CD4-positive, alpha-beta T cell (primary cell): ENCODE measurements at regions of chr19 and their contacts with region 1.

Region 1: DNA sequence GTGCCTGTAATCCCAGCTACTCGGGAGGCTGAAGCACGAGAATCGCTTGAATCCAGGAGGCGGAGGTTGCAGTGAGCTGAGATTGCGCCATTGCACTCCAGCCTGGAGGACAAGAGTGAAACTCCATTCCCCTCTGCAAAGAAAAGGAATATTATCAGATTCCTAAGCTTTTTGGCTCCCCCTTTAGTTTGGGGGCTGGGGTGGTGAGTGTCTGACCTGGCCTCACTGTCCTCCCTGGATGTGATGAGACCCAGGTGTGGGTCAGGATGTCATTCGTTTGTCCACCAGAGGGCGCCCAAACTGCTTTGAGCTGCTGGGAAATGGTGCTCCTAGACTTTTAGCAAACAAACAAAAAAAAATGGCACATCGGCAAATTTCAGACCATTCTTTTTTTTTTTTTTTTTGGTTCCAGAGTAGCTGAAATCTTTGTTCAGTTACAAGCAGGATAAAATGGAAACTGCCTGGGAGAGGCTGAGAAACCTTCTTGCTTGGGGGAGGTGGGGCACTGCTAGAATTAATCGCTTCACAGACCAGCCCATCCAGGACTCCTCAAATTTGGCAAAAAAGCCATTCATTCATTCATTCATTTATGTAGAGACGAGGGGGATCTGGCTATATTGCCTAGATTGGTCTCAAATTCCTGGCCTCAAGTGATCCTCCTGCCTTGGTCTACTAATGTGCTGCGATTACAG is 29.4 kb downstream of the SPC24 start:
- DNase-seq: peak; percentile 65 to 88 (median 74)
- ATAC-seq: peak; percentile 64
- H3K4me3 ChIP-seq: no peak overlapping the region
- H3K4me3 Mint-ChIP-seq: no peak overlapping the region
- H3K27ac ChIP-seq: no peak overlapping the region
- H3K27ac Mint-ChIP-seq: no peak overlapping the region
- H3K4me1 ChIP-seq: peaks cover 12% of the 10 kb centered on the region
- H3K4me1 Mint-ChIP-seq: no peaks in the 10 kb centered on the region
- H3K27me3 ChIP-seq: no peaks in the 10 kb centered on the region
- H3K27me3 Mint-ChIP-seq: no peaks in the 10 kb centered on the region
- CTCF ChIP-seq: peak; percentile 82

Region 2: DNA sequence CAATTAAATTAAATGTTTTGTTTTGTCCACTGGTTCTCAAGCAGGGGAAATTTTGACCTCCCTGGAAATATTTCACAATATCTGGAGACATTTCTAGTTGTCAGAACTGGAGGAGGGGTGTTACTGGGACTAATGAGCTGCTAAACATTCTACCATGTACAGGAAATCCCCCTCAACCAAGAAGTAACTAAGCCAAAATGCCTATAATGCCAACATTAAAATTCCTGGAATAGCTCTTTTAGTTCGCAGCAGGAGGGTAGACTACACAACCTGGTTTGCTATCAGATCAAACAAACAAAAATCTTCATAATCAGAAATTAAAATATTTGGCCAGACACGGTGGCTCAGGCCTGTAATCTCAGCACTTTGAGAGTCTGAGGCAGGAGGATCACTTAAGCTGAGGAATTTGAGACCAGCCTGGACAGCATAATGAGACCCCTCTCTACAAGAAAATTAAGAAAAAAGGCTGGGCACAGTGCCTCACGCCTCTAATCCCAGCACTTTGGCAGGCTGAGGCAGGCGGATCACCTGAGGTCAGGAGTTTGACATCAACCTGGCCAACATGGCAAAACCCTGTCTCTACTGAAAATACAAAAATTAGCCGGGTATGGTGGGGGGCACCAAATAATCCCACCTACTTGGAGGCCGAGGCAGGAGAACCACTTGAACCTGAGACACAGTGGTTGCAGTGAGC is 179.0 kb before region 1 on chr19:
- CTCF ChIA-PET with region 1: no interaction called
- POLR2A ChIA-PET with region 1: no interaction called
- intact Hi-C with region 1: no loop called
- DNase-seq: no peak
- ATAC-seq: no peak
- H3K4me3 ChIP-seq: no peak overlapping the region
- H3K4me3 Mint-ChIP-seq: no peak overlapping the region
- H3K27ac ChIP-seq: no peak overlapping the region
- H3K27ac Mint-ChIP-seq: no peak overlapping the region
- H3K4me1 ChIP-seq: peaks cover 2% of the 10 kb centered on the region
- H3K4me1 Mint-ChIP-seq: peaks cover 2% of the 10 kb centered on the region
- H3K27me3 ChIP-seq: no peaks in the 10 kb centered on the region
- H3K27me3 Mint-ChIP-seq: no peaks in the 10 kb centered on the region
- CTCF ChIP-seq: no peak

Region 3: DNA sequence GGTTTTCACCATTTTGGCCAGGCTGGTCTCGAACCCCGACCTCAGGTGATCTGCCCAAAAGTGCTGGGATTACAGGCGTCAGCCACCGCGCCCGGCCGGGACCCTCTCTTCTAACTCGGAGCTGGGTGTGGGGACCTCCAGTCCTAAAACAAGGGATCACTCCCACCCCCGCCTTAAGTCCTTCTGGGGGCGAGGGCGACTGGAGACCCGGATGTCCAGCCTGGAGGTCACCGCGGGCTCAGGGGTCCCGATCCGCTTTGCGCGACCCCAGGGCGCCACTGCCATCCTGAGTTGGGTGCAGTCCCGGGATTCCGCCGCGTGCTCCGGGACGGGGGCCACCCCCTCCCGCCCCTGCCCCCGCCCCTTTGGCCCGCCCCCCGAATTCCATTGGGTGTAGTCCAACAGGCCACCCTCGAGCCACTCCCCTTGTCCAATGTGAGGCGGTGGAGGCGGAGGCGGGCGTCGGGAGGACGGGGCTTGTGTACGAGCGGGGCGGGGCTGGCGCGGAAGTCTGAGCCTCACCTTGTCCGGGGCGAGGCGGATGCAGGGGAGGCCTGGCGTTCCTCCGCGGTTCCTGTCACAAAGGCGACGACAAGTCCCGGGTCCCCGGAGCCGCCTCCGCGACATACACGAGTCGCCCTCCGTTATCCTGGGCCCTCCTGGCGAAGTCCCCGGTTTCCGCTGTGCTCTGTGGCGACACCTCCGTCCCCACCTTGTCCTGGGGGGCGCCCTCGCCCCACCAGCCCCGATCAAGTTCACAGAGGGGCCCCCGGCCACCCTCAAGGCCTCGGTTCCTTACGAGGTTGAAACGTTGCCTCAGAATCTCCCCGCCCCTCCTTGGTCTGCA is 35.9 kb before region 1 on chr19:
- CTCF ChIA-PET with region 1: interaction called, 20 read pairs
- POLR2A ChIA-PET with region 1: interaction called, 10 read pairs
- intact Hi-C with region 1: loop called (anchors 5 kb)
- DNase-seq: peak; percentile 94 to 99 (median 97)
- ATAC-seq: peak; percentile 86
- H3K4me3 ChIP-seq: peak overlapping the region; percentile 86
- H3K4me3 Mint-ChIP-seq: peak overlapping the region; percentile 89
- H3K27ac ChIP-seq: peak overlapping the region; percentile 98 to 99
- H3K27ac Mint-ChIP-seq: peak overlapping the region; percentile 92
- H3K4me1 ChIP-seq: peaks cover 73% of the 10 kb centered on the region
- H3K4me1 Mint-ChIP-seq: peaks cover 49% of the 10 kb centered on the region
- H3K27me3 ChIP-seq: no peaks in the 10 kb centered on the region
- H3K27me3 Mint-ChIP-seq: no peaks in the 10 kb centered on the region
- CTCF ChIP-seq: no peak

Region 4: DNA sequence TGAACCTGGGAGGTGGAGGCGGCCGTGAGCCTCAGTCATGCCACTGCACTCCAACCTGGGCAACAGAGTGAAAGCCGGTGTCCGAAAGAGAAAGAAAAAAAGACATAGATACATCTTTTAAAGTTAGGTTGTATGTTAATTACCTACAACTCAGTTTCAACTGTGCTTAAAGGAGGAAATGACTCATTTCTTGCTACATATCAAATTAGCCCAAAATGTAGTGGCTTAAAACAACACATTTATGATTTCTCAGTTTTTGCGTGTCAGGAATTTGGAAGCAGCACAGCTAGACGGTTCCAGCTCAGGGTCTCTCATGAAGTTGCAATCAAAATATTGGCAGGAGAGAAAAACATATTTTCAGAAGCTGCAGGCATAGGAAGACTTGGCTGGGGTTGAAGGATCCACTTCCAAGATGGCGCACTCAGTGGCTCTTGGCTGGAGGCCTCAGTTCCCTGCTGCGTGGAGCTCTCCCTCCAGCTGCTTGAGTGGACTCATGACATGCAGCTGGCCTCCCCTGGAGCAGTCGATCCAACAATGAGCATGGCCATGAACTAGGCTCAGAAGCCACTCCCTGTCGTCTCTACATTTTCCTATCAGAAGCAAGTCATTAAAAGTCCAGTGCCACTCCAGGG is 29.8 kb before region 1 on chr19:
- CTCF ChIA-PET with region 1: interaction called, 20 read pairs
- POLR2A ChIA-PET with region 1: no interaction called
- intact Hi-C with region 1: loop called in 1 of 2 experiments (anchors 5 kb)
- DNase-seq: peak in 6 of 14 experiments; percentile 5 to 71 (median 50)
- ATAC-seq: peak; percentile 13
- H3K4me3 ChIP-seq: peak overlapping the region; percentile 3
- H3K4me3 Mint-ChIP-seq: peak overlapping the region; percentile 18
- H3K27ac ChIP-seq: peak overlapping the region; percentile 79 to 89
- H3K27ac Mint-ChIP-seq: peak overlapping the region; percentile 84
- H3K4me1 ChIP-seq: peaks cover 63% of the 10 kb centered on the region
- H3K4me1 Mint-ChIP-seq: peaks cover 34% of the 10 kb centered on the region
- H3K27me3 ChIP-seq: no peaks in the 10 kb centered on the region
- H3K27me3 Mint-ChIP-seq: no peaks in the 10 kb centered on the region
- CTCF ChIP-seq: no peak

Region 5: GRCh38 chr19:11256189-11256588 is 130.0 kb after region 1 on chr19:
- CTCF ChIA-PET with region 1: no interaction called
- POLR2A ChIA-PET with region 1: no interaction called
- intact Hi-C with region 1: no loop called
- DNase-seq: no peak
- ATAC-seq: no peak
- H3K4me3 ChIP-seq: no peak overlapping the region
- H3K4me3 Mint-ChIP-seq: no peak overlapping the region
- H3K27ac ChIP-seq: no peak overlapping the region
- H3K27ac Mint-ChIP-seq: no peak overlapping the region
- H3K4me1 ChIP-seq: no peaks in the 10 kb centered on the region
- H3K4me1 Mint-ChIP-seq: no peaks in the 10 kb centered on the region
- H3K27me3 ChIP-seq: peaks cover 2 to 4% of the 10 kb centered on the region in 2 experiments
- H3K27me3 Mint-ChIP-seq: peaks cover 18% of the 10 kb centered on the region
- CTCF ChIP-seq: no peak